ENCODE measurements at regions of chr2 and their contacts with region 1.

Region 1: GRCh38 chr2:203484266-203485112 is 50.6 kb downstream of the RAPH1 start:
- DNase-seq: no peak
- ATAC-seq: peak; percentile 88

Region 2: GRCh38 chr2:203177361-203177760 is 307.1 kb before region 1 on chr2:
- intact Hi-C with region 1: no loop called
- DNase-seq: no peak
- ATAC-seq: peak; percentile 59

Region 3: GRCh38 chr2:203650860-203651613 is 166.5 kb after region 1 on chr2:
- intact Hi-C with region 1: loop called in 1 of 2 experiments (anchors 10 kb)
- DNase-seq: peak; percentile 48 to 77
- ATAC-seq: peak; percentile 86

Region 4: GRCh38 chr2:203814661-203815540 is 330.4 kb after region 1 on chr2:
- intact Hi-C with region 1: loop called in 1 of 2 experiments (anchors 10 kb)
- DNase-seq: peak; percentile 57 to 62
- ATAC-seq: peak; percentile 70

Region 5: DNA sequence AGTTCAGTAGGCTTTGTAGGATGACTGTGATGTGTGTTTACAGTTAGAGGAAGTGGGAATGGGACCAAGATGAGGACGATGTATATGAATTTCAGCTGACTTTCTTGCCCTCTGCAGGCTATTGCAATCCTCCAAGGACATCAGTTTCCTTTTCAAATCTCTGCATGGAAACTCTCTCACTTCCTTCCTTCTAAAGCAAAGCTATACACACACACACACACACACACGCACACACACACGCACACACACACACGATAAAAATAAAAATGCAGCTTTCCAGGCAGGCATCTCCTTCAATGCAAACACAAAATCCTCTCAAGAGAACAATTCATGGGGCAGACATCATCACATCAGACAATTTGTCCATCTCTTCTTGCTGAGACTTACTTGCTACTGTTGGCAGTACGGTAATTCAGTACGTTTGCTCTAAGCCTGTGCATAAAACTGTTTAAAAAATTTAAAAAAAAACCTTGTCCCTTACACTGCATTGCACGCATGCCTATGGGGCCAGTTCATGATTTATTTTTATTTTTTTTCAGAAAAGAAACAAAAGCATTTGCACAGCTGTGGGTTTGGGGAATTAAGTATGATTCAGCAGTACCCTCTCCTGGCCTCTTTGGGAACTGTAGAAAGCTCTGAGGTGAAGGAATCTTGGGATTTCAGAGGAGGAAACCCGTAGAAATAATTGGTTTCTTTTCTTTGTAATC is 424.9 kb after region 1 on chr2:
- intact Hi-C with region 1: loop called in 1 of 2 experiments (anchors 10 kb)
- DNase-seq: no peak
- ATAC-seq: peak; percentile 79

Measured in left colon (tissue), 2 donors.